PC-9 (cell line): ENCODE measurements at regions of chr21 and their contacts with region 1.

Region 1: DNA sequence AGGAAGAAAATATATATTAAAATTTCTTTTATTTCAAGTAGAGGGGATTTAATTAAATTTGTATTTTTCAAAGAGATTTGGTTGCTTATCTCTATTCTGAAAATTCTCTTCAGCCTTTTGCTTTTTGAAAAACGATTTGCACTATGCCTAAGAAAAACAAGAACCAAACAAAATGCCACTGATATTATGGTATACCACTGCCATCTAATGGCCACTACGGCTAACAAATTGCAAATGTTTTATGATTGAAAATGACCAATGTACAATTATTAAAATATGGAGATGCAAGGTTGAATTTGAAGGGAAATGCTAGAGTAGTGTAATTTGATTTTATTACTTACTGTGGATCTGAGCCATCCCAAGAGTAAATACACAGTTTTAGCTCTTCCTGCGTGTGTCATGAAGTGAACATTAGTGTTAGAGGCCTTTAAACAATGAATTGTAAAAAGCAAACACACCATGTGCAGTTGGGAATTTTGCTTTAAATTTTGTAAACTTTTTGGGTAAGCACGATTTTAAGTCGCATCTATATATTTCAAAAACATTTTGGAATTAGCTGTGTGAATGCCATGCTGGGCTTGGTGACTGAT is 137.4 kb upstream of the USP25 start:
- DNase-seq: peak in 1 of 2 experiments; percentile 39
- H3K4me3 ChIP-seq: no peak overlapping the region
- H3K27ac ChIP-seq: no peak overlapping the region
- H3K4me1 ChIP-seq: no peaks in the 10 kb centered on the region
- H3K27me3 ChIP-seq: no peaks in the 10 kb centered on the region
- CTCF ChIP-seq: peak; percentile 78

Region 2: DNA sequence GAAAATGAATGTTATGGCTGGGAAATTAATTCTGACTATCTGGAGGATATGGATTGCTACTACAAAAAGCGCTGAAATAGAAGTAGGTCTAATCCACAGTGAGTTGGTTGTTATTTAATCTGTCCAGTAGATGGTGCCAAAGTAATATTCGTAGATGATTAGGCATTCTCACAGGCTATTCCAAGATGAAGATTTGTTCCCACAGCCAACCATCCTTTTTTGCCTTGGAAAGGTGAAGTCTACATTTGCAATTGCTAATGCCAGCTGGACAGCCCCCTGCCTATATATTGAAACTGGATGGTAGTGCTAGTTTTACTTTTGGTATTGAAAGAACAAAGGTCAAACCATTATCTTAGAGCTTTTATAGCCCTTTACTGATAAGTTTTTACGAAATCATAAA is 1332.6 kb before region 1 on chr21:
- CTCF ChIA-PET with region 1: no interaction called
- POLR2A ChIA-PET with region 1: no interaction called
- intact Hi-C with region 1: loop called (anchors 5 kb)
- DNase-seq: no peak
- H3K4me3 ChIP-seq: no peak overlapping the region
- H3K27ac ChIP-seq: no peak overlapping the region
- H3K4me1 ChIP-seq: no peaks in the 10 kb centered on the region
- H3K27me3 ChIP-seq: no peaks in the 10 kb centered on the region
- CTCF ChIP-seq: peak; percentile 67

Region 3: GRCh38 chr21:15552914-15553494 is 39.4 kb before region 1 on chr21:
- CTCF ChIA-PET with region 1: no interaction called
- POLR2A ChIA-PET with region 1: no interaction called
- intact Hi-C with region 1: no loop called
- DNase-seq: peak in 1 of 2 experiments; percentile 37
- H3K4me3 ChIP-seq: no peak overlapping the region
- H3K27ac ChIP-seq: no peak overlapping the region
- H3K4me1 ChIP-seq: no peaks in the 10 kb centered on the region
- H3K27me3 ChIP-seq: no peaks in the 10 kb centered on the region
- CTCF ChIP-seq: peak; percentile 66

Region 4: DNA sequence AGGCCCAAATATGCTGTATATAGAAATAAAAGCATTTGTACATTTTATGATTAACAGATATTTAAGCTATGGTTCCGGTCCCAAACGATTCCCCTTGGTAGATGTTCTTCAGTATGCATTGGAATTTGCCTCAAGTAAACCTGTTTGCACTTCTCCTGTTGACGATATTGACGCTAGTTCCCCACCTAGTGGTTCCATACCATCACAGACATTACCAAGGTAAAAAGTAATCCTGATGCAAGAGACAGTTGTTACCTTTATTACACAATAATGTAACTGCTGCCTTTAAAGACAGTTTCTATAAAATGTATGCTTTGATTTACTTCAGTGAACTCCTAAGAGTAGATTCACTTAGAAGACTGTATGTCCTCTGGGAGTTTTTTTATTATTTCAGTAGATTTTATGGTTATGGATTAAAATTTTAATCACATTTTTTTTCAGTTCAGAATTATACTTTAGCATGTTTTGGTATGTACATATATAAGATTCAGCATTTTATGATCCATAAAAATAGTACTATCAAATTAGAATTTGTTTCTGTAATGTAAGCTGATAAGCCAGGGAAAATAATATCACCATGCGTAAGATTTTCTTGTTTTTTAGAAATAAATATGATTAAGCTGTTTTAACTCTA is 233.9 kb after region 1 on chr21:
- CTCF ChIA-PET with region 1: no interaction called
- POLR2A ChIA-PET with region 1: no interaction called
- intact Hi-C with region 1: loop called (anchors 2 kb)
- DNase-seq: peak in 1 of 2 experiments; percentile 34
- H3K4me3 ChIP-seq: no peak overlapping the region
- H3K27ac ChIP-seq: peak overlapping the region; percentile 20; the same call in 1 of the 2 replicates
- H3K4me1 ChIP-seq: peaks cover 6% of the 10 kb centered on the region; the same call in 1 of the 2 replicates
- H3K27me3 ChIP-seq: no peaks in the 10 kb centered on the region
- CTCF ChIP-seq: peak; percentile 64

Region 5: DNA sequence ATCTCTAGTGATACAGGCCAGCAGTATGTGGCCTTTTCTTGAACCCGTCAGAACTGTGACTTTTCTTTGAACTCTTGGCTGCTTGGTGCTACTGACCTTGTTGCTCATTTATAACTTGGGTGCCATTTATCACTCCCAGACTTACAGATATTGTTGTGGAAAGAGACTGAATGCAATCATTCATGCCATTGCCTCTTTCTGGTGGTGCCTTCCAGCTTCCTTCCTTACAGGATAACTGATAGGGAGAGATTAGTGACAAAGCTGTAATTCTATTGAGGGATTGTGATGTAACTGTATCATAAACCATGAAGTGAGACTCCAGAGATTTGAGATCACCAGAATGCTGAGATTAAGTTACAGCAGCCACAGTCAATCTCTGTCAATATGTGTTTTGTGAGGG is 393.9 kb after region 1 on chr21:
- CTCF ChIA-PET with region 1: no interaction called
- POLR2A ChIA-PET with region 1: no interaction called
- intact Hi-C with region 1: no loop called
- DNase-seq: no peak
- H3K4me3 ChIP-seq: no peak overlapping the region
- H3K27ac ChIP-seq: no peak overlapping the region
- H3K4me1 ChIP-seq: no peaks in the 10 kb centered on the region
- H3K27me3 ChIP-seq: no peaks in the 10 kb centered on the region
- CTCF ChIP-seq: no peak